Left lung (tissue), 14 donors: ENCODE measurements at regions of chr9 and their contacts with region 1.

Region 1: DNA sequence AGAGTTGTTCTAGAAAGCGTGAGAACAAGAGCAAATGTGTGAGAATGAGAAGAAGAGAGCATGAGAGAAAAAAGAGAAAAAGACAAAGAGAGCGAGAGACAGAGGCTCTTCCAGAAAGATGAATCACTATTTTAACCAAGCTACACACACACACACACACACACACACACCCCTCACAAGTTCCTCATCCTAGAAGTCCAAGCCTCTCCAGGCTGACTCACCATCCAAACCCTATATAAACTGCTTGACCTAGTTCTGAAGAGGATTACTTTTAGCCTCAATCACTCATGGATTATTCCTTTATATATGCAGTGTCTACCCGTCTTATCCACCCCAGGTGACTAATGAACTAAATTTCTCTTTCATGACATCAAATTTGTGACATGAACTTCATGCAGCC is 37.6 kb downstream of the C9orf57 start:
- DNase-seq: no peak
- ATAC-seq: peak; percentile 78
- H3K4me3 ChIP-seq: no peak overlapping the region
- H3K27ac ChIP-seq: no peak overlapping the region
- H3K4me1 ChIP-seq: no peaks in the 10 kb centered on the region
- H3K27me3 ChIP-seq: no peaks in the 10 kb centered on the region
- CTCF ChIP-seq: no peak

Region 2: DNA sequence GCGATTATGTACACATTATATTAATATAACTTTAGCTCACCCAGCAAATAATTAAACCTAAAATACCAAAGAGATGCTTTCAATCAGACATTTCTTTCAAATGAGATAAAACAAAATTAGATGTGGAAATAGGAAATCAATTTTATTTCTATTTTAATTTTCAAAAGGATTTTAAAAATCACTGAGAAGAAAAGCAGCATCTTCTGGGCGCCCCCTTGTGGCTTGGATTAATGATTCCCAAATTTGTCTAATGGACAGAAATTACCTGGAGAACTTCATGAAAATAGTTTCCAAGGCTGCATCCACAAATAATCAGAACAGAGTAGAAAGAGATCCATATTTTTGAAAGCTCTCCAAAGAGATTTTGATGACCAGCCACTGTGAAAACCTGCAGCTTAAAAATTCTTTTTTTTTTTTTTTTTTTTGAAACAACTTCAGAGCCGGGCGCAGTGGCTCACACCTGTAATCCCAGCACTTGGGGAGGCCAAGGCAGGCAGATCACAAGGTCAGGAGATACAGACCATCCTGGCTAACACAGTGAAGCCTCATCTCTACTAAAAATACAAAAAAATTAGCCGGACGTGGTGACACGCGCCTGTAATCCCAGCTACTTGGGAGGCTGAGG is 203.6 kb before region 1 on chr9:
- intact Hi-C with region 1: loop called in 1 of 2 experiments (anchors 10 kb)
- DNase-seq: peak in 1 of 4 donors; percentile 42
- ATAC-seq: no peak
- H3K4me3 ChIP-seq: no peak overlapping the region
- H3K27ac ChIP-seq: no peak overlapping the region
- H3K4me1 ChIP-seq: no peaks in the 10 kb centered on the region
- H3K27me3 ChIP-seq: no peaks in the 10 kb centered on the region
- CTCF ChIP-seq: peak; percentile 62 to 67

Region 3: GRCh38 chr9:71839665-71840064 is 183.2 kb before region 1 on chr9:
- intact Hi-C with region 1: no loop called
- DNase-seq: no peak
- ATAC-seq: no peak
- H3K4me3 ChIP-seq: no peak overlapping the region
- H3K27ac ChIP-seq: no peak overlapping the region
- H3K4me1 ChIP-seq: no peaks in the 10 kb centered on the region
- H3K27me3 ChIP-seq: no peaks in the 10 kb centered on the region
- CTCF ChIP-seq: no peak

Region 4: DNA sequence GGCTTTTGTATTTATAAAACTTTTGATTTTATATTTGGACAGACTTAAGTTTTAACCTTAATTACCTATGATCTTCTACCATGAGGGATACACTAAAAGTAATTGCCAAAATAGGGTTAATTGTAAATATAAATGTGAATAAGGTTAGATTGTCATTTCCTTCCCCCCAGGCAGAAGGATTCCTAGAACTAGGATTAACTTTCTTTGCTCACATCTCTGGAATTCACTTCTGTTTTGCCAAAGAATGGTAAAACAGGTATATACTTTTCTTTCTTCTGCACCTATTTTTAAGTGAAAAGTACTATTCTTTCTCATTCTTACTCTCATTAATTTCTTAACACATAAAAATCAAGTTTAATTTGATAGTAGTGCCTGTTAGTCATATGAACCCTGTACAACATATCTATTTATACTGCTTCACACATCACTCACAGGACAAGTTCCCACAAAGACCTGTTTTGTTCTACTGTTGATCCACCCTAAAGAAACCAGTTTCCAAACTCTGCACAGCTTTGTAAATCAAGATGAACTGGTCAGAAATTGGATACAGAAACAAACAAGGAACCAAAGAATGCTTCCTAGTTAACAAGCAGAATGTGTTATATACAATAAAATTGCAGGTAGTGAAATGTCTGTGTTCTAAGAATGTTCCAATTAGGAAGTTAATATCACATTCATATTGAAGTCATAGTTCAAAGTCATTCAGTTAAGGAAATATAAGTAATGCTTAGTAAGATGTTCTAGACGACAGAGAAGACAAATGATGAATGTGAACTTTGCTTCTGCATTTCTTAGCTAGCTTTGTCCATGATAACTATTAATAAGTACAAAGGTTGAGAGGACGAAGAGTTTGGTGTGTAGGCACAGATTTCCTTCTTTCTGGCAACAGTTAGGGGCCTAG is 78.1 kb before region 1 on chr9:
- intact Hi-C with region 1: no loop called
- DNase-seq: no peak
- ATAC-seq: no peak
- H3K4me3 ChIP-seq: no peak overlapping the region
- H3K27ac ChIP-seq: no peak overlapping the region
- H3K4me1 ChIP-seq: no peaks in the 10 kb centered on the region
- H3K27me3 ChIP-seq: no peaks in the 10 kb centered on the region
- CTCF ChIP-seq: no peak

Region 5: DNA sequence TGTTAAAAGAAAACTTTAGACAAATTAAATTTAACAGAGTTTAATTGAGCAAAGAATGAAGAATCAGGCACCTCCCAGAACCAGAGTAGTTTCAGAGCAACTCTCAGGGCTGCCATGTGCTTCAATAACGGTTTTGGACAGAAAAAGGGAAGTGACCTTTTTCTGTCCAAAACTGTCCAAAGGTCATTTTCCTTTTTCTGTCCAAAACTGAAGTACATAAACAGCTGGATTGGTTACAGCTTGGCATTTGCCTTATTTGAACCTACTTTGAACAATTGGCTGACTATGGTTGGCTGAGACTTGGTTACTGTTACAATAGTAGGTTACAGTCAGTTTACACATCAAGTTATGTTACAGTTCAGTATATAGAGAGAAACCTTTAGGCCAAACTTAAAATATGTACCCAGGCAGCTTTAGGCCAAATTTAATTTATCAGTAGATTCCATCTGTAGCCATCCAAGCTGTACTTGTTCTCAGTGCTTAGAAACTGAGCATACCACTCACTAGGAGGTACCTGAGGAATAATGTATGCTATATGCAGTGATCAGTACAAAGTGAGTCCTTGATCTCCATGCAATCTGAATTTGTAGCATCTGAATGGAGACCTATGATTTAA is 67.4 kb before region 1 on chr9:
- intact Hi-C with region 1: no loop called
- DNase-seq: no peak
- ATAC-seq: no peak
- H3K4me3 ChIP-seq: no peak overlapping the region
- H3K27ac ChIP-seq: no peak overlapping the region
- H3K4me1 ChIP-seq: no peaks in the 10 kb centered on the region
- H3K27me3 ChIP-seq: no peaks in the 10 kb centered on the region
- CTCF ChIP-seq: no peak